HCT116 (cell line): ENCODE measurements at regions of chr15 and their contacts with region 1.

Region 1: DNA sequence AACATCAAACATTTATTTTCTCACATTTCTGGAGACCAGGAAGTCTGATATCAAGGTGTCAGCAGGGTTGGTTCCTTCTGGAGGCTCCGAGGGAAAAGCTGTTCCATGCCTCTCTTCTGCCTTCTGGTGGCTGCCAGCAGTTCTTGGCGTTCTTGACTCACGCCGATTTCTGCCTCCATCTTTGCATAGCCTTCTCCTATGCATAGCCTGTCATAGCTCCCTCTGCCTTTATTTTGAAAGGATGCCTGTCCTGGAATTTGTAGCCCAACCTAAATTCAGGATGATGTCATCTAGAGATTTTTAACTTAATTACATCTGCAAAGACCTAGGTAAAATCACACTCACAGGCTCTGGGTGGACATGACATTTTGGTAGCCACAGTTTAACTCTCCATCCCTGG is 70.4 kb downstream of the RGMA start:
- DNase-seq: no peak
- ATAC-seq: peak; percentile 81
- H3K4me3 ChIP-seq: no peak overlapping the region
- H3K27ac ChIP-seq: no peak overlapping the region
- H3K4me1 ChIP-seq: no peaks in the 10 kb centered on the region
- H3K27me3 ChIP-seq: no peaks in the 10 kb centered on the region
- CTCF ChIP-seq: peak in 2 of 3 experiments; percentile 35 to 47; a peak in 4 of 6 replicates
- POLR2A ChIP-seq: no peak
- RAD21 ChIP-seq: peak; percentile 38

Region 2: GRCh38 chr15:92693691-92694331 is 324.8 kb before region 1 on chr15:
- CTCF ChIA-PET with region 1: no interaction called
- POLR2A ChIA-PET with region 1: no interaction called
- RAD21 ChIA-PET with region 1: no interaction called
- intact Hi-C with region 1: loop called (anchors 1 kb)
- DNase-seq: peak; percentile 34
- ATAC-seq: peak; percentile 99
- H3K4me3 ChIP-seq: no peak overlapping the region
- H3K27ac ChIP-seq: no peak overlapping the region
- H3K4me1 ChIP-seq: no peaks in the 10 kb centered on the region
- H3K27me3 ChIP-seq: peaks cover 6% of the 10 kb centered on the region; the same call in 1 of the 2 replicates
- CTCF ChIP-seq: peak; percentile 40 to 82 (median 67); a peak in 5 of 6 replicates
- POLR2A ChIP-seq: no peak
- RAD21 ChIP-seq: peak; percentile 48

Region 3: GRCh38 chr15:92797168-92797951 is 221.2 kb before region 1 on chr15:
- CTCF ChIA-PET with region 1: interaction called, 18 read pairs
- POLR2A ChIA-PET with region 1: no interaction called
- RAD21 ChIA-PET with region 1: interaction called in 1 of 2 experiments, 4 read pairs
- intact Hi-C with region 1: loop called (anchors 5 kb)
- DNase-seq: peak; percentile 73
- ATAC-seq: peak; percentile 54
- H3K4me3 ChIP-seq: no peak overlapping the region
- H3K27ac ChIP-seq: 0 out of 2 replicates have a peak overlapping the region, but pooled peaks have one; percentile 1
- H3K4me1 ChIP-seq: peaks cover 27 to 45% of the 10 kb centered on the region in 2 experiments
- H3K27me3 ChIP-seq: no peaks in the 10 kb centered on the region
- CTCF ChIP-seq: peak in 2 of 3 experiments; percentile 59 to 81; a peak in 4 of 6 replicates
- POLR2A ChIP-seq: no peak
- RAD21 ChIP-seq: no peak